GM10248 (cell line): ENCODE measurements at regions of chr4 and their contacts with region 1.

Region 1: GRCh38 chr4:68498413-68499007 is 51.2 kb downstream of the TMPRSS11E start:
- DNase-seq: peak; percentile 33
- CTCF ChIP-seq: peak; percentile 86

Region 2: DNA sequence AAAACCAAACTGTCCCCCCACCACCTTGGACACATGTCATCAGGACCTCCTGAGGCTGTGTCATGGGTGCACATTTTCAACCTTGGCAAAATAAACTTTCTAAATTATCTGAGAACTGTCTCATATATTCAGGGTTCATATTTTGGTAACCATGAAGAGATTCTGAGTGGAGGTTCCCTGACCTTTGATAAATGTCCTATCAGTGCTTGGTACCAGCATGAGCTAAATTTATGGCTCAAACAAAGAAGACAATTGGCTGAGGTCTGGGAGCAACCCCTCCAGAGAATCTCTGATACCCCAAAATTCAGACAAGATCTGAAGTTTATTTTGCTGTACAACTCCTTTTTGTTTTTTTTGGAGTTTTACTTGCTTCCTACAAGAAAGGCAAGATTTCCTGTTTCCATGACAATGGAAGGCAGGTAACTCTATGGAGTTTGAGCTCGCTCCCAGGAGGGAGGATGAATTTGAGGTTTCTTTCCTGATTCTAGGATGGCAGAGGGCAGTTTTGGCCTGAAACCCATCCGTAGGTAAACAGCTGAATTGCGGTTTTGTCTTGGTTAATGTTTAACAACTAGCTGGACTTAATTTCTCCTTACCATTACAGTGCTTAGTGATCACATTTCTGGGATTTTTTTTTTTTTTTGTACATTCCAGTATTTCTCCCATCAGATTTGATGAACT is 157.4 kb after region 1 on chr4:
- CTCF ChIA-PET with region 1: interaction called, 16 read pairs
- POLR2A ChIA-PET with region 1: no interaction called
- DNase-seq: no peak
- CTCF ChIP-seq: no peak

Region 3: GRCh38 chr4:68673143-68673542 is 174.6 kb after region 1 on chr4:
- CTCF ChIA-PET with region 1: interaction called, 10 read pairs
- POLR2A ChIA-PET with region 1: no interaction called
- DNase-seq: no peak
- CTCF ChIP-seq: no peak

Region 4: GRCh38 chr4:69167300-69167699 is 668.8 kb after region 1 on chr4:
- CTCF ChIA-PET with region 1: interaction called, 10 read pairs
- POLR2A ChIA-PET with region 1: no interaction called
- DNase-seq: no peak
- CTCF ChIP-seq: no peak